ENCODE measurements at regions of chr4 and their contacts with region 1.

Region 1: DNA sequence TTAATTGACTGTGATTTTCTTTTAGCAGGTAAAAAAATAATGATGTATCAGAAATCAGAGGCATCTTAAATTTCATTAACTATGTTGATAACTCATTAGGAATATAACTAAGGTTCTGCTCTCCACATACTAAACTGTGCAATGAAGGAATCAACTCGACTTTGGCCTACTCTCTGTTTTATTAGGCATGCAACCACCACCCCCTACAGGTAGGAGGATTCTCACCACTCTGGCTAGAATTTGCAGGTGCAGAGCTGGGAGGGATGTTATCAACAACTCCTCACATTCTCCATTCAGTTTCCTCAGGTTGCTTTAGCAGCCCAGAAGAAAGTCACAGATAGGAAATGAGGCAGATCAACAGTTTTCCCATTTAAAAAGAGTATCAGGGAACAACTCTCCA is 160.1 kb downstream of the COX18 start:
- DNase-seq: no peak
- ATAC-seq: no peak

Region 2: DNA sequence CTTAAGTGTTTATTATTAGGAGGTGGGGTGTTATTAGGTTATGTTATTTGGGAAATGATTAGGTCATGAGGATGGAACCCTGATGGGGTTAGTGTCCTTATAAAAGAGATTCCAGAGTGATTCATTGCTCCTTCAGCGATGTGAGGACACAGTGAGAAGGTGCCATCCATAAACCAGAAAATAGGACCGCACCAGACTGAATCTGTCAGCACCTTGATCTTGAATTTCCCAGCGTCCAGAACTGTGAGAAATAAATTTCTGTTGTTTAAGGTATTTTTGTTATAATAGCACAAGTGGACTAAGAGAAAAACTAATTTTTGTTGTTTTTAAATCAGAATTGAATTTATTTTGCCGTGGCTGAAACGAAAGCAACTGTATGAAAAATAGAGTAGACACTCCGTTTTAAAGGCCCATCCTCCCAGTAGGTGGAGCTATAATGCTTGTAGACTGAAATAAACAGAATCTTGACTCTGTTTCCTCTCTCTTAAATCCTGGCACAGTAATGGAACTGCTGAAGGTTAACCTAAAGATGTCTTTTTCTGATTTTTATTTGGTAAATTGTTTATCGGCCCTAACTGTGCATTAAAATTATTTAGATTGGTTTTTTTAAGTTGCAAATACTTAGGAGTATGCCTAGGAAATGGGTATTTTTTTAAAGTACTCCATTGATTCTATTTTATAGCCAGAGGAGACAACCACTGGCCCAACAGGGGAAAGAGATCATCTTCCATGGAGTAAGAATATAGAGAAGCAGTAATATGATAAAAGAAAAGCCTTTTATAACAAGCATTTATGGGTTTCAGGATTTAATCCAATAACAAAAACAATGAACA is 207.3 kb before region 1 on chr4:
- intact Hi-C with region 1: loop called (anchors 10 kb)
- DNase-seq: no peak
- ATAC-seq: no peak